KBM-7 (cell line): ENCODE measurements at regions of chr6 and their contacts with region 1.

Region 1: DNA sequence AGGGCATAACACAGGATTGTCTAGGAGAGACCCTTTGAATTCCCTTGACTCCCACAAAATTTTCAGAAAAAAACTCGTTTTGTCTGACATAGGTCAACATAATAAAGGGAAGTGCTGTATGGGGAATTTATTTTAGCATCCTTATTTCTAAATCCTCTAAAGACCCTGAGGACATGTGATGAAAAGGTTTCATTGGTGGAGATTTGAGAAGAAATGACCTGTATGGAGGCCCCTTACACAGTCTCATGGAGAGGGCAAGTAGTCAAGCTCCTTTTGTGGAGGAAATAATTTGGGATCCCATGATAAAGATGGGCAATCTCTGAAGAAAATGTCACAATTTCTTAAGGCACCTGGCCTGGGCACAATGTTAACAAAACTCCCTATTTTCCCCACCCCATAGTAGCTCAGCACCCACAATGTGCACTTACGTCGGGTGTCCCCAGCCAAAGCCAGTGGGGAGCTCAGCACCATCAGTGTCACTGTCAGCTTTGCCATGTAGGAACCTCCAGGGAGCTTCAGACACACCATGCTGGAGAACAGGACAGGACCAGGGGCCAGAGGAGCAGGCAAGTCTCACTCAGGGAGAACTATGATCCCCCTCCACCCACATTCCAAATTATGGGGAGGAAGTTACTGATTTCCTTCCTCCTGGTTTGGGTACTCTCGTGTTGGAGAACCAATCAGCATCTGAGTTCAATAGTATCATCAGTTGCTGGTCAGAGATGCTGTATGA is at the start of gene HLA-DRB5:
- DNase-seq: peak; percentile 26

Region 2: DNA sequence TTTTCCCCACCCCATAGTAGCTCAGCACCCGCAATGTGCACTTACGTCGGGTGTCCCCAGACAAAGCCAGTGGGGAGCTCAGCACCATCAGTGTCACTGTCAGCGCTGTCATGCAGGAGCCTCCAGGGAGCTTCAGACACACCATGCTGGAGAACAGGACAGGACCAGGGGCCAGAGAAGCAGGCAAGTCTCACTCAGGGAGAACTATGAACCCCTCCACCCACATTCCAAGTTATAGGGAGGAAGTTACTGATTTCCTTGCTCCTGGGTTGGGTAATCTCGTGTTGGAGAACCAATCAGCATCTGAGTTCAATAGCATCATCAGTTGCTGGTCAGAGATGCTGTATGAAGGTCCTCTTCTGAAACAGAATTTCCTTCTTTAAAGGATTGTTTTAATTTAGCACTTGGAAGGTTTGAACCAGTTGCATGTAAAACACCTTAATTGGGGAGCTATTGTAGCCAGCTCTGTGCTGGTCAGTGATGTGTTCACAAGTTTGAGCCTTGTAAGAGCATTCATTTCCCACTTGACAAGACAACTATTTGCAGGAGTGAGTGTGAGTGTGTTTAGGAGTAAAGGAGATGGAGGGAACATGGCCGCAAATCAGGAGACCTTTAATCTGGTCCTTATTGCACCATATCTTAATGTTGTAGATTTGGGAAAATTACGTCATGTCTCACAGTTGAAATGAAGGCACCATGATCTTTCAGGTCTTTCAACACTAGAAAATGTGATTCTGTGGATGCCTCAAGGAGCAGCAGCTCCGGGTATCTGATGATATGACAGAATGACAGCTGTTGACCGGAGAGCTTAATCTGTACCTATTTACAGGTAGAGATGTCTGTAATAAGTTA is 60.0 kb after region 1 on chr6 and contains the start of gene HLA-DRB1:
- in situ Hi-C with region 1: loop called (anchors 5 kb)
- DNase-seq: peak; percentile 83